Heart right ventricle (tissue), 16 donors: ENCODE measurements at regions of chr13 and their contacts with region 1.

Region 1: GRCh38 chr13:97855570-97856303 is 97.7 kb upstream of the IPO5 start:
- DNase-seq: peak; percentile 48 to 60
- ATAC-seq: peak; percentile 70 to 92 (median 86)
- H3K4me3 ChIP-seq: no peak overlapping the region
- H3K27ac ChIP-seq: peak overlapping the region in 2 of 10 donors; percentile 5 to 24
- H3K4me1 ChIP-seq: peaks cover 0 to 10% (median 4%) of the 10 kb centered on the region in 9 donors
- H3K27me3 ChIP-seq: no peaks in the 10 kb centered on the region
- CTCF ChIP-seq: peak; percentile 76 to 95 (median 84)

Region 2: DNA sequence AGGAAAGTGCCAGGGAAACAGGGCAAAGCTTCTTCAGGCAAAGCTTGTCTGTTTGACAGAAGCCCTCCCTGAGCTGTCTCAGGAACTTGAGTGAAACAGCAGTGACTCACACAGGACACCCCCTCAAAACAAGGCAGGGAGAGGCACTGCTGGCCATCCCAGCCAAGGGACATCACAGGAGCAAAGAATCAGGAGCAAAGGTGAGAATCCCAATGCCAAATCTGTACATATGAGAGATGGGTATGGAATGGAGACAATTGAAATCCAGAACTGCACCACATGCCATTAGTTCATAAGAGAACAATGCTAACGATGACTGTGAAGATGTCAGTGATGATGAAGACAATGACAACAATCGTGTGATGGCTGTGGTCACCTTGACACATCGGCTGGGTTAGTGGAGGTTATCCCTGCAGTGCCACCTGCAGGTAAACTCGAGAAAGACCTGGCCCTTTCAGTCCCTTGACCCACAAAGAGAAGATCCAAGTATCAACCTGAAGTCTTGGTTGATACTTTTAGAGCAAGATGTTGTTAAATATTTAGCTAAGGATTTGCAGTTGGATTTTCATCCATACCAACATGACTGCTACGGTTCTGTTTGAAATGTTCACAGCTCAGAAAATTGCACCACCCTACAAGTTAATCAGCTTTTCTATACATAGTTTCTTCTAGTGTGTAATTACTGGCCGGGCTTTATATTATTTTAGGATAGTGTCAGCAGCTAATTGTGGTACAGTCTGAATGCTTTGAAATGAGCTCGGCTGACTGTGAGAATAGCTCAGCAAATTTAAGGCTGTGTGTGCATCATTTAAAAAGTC is 55.8 kb after region 1 on chr13:
- intact Hi-C with region 1: loop called in 5 of 10 experiments (anchors 2 to 5 kb)
- DNase-seq: no peak
- ATAC-seq: no peak
- H3K4me3 ChIP-seq: no peak overlapping the region
- H3K27ac ChIP-seq: no peak overlapping the region
- H3K4me1 ChIP-seq: no peaks in the 10 kb centered on the region
- H3K27me3 ChIP-seq: no peaks in the 10 kb centered on the region
- CTCF ChIP-seq: peak in 7 of 9 donors; percentile 30 to 51 (median 40)

Region 3: DNA sequence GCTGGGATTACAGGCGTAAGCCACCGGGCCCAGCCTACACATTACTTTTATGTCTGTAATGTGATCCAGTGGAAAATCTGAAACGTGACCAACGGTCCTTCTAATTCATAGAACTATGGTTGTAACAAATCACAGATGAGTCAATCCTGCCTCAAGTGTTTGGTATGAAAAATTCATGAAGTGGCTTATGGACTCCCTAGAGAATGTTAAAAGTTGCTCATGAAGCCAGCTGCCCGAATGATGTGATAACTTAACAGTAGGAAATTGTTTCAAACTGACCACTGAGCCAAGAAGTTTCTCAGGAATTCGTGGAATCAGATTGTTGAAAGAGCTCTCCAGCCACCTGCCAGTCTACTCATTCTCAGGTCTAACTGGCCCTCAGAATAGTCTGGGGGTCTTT is 227.8 kb after region 1 on chr13:
- intact Hi-C with region 1: no loop called
- DNase-seq: no peak
- ATAC-seq: peak in 5 of 8 donors; percentile 42 to 72 (median 57)
- H3K4me3 ChIP-seq: no peak overlapping the region
- H3K27ac ChIP-seq: no peak overlapping the region
- H3K4me1 ChIP-seq: no peaks in the 10 kb centered on the region
- H3K27me3 ChIP-seq: no peaks in the 10 kb centered on the region
- CTCF ChIP-seq: peak in 2 of 9 donors; percentile 8 to 10

Region 4: DNA sequence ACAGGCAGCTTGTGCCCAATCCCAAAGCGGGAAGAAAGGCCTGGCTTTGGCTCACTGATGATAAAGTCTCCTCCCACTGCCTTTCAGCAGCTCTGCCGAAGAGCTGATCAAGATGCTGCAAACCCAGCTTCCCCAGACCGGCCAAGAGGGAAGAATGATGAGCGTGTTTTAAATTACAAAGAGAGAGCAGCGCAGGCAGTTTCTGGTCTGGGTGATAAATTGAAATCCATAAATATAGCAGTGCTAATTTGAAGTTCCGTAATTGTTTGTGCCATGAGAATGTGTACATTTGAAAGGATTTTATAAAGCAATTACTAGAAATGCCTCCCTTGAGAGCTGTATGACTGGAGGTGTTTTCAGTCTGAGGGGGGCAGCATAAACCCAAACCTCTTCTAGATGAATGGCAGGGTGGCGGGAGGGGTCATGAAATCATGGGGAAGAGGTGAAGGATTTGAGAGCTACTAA is 549.4 kb after region 1 on chr13:
- intact Hi-C with region 1: loop called in 1 of 10 experiments (anchors 10 kb)
- DNase-seq: no peak
- ATAC-seq: peak in 3 of 8 donors; percentile 44 to 76 (median 69)
- H3K4me3 ChIP-seq: no peak overlapping the region
- H3K27ac ChIP-seq: no peak overlapping the region
- H3K4me1 ChIP-seq: no peaks in the 10 kb centered on the region
- H3K27me3 ChIP-seq: no peaks in the 10 kb centered on the region
- CTCF ChIP-seq: peak in 2 of 9 donors; percentile 2 to 16

Region 5: DNA sequence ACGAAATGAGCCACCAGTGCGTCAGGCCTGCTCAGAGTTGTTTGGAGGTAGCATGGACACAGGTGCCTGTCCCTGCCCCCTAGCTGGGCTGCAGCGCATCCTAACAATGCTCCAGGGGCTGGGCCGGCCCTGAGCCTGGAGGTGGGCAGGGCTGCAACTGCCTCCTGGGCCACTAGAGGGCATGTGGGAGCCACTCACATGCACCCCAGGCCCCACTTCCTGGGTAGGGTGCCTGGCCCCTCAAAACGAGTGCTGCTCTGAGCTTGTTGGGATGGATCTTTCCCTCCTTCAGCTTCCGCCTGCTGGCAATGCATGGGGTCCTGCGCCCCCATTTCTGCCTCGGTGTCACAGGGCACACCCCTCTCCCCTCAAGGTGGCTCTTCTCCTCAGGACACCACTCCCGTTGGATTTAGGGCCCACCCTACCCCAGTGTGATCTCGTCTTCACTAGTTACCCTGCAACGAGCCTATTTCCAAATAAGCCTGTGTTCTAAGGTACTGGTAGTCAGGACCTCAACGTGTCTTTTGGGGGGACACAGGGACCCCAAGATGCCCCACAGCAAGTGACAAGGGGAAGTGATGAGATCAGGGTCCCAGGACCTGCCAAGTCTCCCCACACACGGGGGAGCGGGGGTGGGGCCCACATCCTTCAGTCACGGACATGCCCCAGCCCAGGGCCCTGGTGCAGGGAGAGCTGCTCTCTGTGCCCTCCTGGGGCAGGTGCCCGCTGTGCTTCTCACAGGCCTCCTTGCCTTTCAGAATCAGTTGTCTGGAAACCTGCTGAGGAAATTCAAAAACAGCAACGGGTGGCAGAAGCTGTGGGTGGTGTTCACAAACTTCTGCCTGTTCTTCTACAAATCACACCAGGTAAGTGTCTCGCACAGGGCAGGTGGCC is 589.9 kb after region 1 on chr13:
- intact Hi-C with region 1: loop called in 1 of 10 experiments (anchors 10 kb)
- DNase-seq: peak; percentile 60 to 75
- ATAC-seq: peak; percentile 73 to 89 (median 81)
- H3K4me3 ChIP-seq: peak overlapping the region in 1 of 10 donors; percentile 4
- H3K27ac ChIP-seq: peak overlapping the region in 3 of 10 donors; percentile 19 to 46 (median 41)
- H3K4me1 ChIP-seq: peaks cover 4 to 35% (median 28%) of the 10 kb centered on the region in 9 donors
- H3K27me3 ChIP-seq: no peaks in the 10 kb centered on the region
- CTCF ChIP-seq: peak; percentile 90 to 99 (median 97)